ENCODE measurements at regions of chr9 and their contacts with region 1.

Region 1: GRCh38 chr9:33264473-33265177 is at the starts of genes BAG1 and CHMP5:
- DNase-seq: peak; percentile 99 to 100 (median 100)
- ATAC-seq: peak; percentile 97
- H3K4me3 ChIP-seq: peak within 1 kb of the TSS; percentile 69 to 98
- H3K4me3 Mint-ChIP-seq: peak within 1 kb of the TSS; percentile 96
- H3K27ac ChIP-seq: peak within 1 kb of the TSS; percentile 74 to 94
- H3K27ac Mint-ChIP-seq: peak within 1 kb of the TSS; percentile 97
- H3K4me1 ChIP-seq: peaks cover 21% of the 10 kb centered on the region
- H3K4me1 Mint-ChIP-seq: peaks cover 62% of the 10 kb centered on the region
- H3K27me3 ChIP-seq: no peaks in the 10 kb centered on the region
- H3K27me3 Mint-ChIP-seq: no peaks in the 10 kb centered on the region
- CTCF ChIP-seq: no peak
- total RNA-seq, gene BAG1: 56.8 to 64.3 TPM
- total RNA-seq, gene CHMP5: 13.4 to 14.2 TPM

Region 2: GRCh38 chr9:33007755-33008154 is 256.9 kb before region 1 on chr9:
- CTCF ChIA-PET with region 1: no interaction called
- POLR2A ChIA-PET with region 1: no interaction called
- intact Hi-C with region 1: loop called in 1 of 2 experiments (anchors 5 kb)
- DNase-seq: no peak
- ATAC-seq: no peak
- H3K4me3 ChIP-seq: no peak overlapping the region
- H3K4me3 Mint-ChIP-seq: no peak overlapping the region
- H3K27ac ChIP-seq: no peak overlapping the region
- H3K27ac Mint-ChIP-seq: no peak overlapping the region
- H3K4me1 ChIP-seq: no peaks in the 10 kb centered on the region
- H3K4me1 Mint-ChIP-seq: no peaks in the 10 kb centered on the region
- H3K27me3 ChIP-seq: no peaks in the 10 kb centered on the region
- H3K27me3 Mint-ChIP-seq: no peaks in the 10 kb centered on the region
- CTCF ChIP-seq: no peak

Region 3: DNA sequence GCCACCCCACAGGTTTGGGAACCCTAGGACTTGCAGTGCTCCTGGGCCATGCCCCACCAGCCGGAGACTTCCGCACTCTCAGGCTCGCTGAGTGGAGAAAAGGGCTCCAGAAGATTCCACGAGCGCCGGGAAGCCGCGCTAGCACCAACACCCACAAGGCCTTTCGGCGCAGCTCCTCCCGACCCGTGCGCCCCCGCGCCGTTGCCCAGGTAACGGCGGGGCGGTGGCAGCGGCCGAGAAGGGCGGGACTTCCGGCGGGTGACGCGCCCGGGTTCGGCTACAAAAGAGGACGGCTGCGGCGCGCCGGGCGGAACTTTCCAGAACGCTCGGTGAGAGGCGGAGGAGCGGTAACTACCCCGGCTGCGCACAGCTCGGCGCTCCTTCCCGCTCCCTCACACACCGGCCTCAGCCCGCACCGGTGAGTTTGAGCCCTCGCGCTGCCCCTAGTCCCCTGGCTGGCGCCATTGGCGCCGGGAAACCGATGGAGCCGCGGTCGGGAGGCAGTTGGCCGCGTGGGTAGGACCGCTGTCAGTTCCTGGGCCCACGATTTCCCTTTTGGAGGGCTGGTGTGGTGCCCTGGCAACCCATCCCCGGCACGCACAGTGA is 239.6 kb before region 1 on chr9 and contains the start of gene DNAJA1:
- CTCF ChIA-PET with region 1: interaction called, 3 read pairs
- POLR2A ChIA-PET with region 1: interaction called, 4 read pairs
- intact Hi-C with region 1: loop called (anchors 1 kb)
- DNase-seq: peak; percentile 92 to 98 (median 96)
- ATAC-seq: peak; percentile 80
- H3K4me3 ChIP-seq: peak within 1 kb of the TSS; percentile 100
- H3K4me3 Mint-ChIP-seq: peak within 1 kb of the TSS; percentile 96
- H3K27ac ChIP-seq: peak within 1 kb of the TSS; percentile 100
- H3K27ac Mint-ChIP-seq: peak within 1 kb of the TSS; percentile 96
- H3K4me1 ChIP-seq: peaks cover 63% of the 10 kb centered on the region
- H3K4me1 Mint-ChIP-seq: peaks cover 70% of the 10 kb centered on the region
- H3K27me3 ChIP-seq: no peaks in the 10 kb centered on the region
- H3K27me3 Mint-ChIP-seq: no peaks in the 10 kb centered on the region
- CTCF ChIP-seq: no peak
- total RNA-seq, gene DNAJA1: 170 to 172 TPM

Region 4: GRCh38 chr9:33244137-33244784 is 20.4 kb before region 1 on chr9:
- CTCF ChIA-PET with region 1: no interaction called
- POLR2A ChIA-PET with region 1: no interaction called
- intact Hi-C with region 1: no loop called
- DNase-seq: no peak
- ATAC-seq: no peak
- H3K4me3 ChIP-seq: no peak overlapping the region
- H3K4me3 Mint-ChIP-seq: no peak overlapping the region
- H3K27ac ChIP-seq: no peak overlapping the region
- H3K27ac Mint-ChIP-seq: no peak overlapping the region
- H3K4me1 ChIP-seq: no peaks in the 10 kb centered on the region
- H3K4me1 Mint-ChIP-seq: peaks cover 3% of the 10 kb centered on the region
- H3K27me3 ChIP-seq: no peaks in the 10 kb centered on the region
- H3K27me3 Mint-ChIP-seq: no peaks in the 10 kb centered on the region
- CTCF ChIP-seq: no peak

Measured in CD8-positive, alpha-beta T cell (primary cell).